B cell (primary cell): ENCODE measurements at regions of chr9 and their contacts with region 1.

Region 1: GRCh38 chr9:101398068-101398929 is at the starts of genes MRPL50 and ZNF189:
- DNase-seq: peak; percentile 99
- ATAC-seq: peak; percentile 93
- H3K4me3 ChIP-seq: peak within 1 kb of the TSS; percentile 72 to 98 (median 92)
- H3K4me3 Mint-ChIP-seq: peak within 1 kb of the TSS; percentile 100
- H3K27ac ChIP-seq: peak within 1 kb of the TSS; percentile 87 to 97
- H3K27ac Mint-ChIP-seq: peak within 1 kb of the TSS; percentile 99
- H3K4me1 ChIP-seq: peaks cover 20 to 21% of the 10 kb centered on the region in 2 donors
- H3K4me1 Mint-ChIP-seq: peaks cover 74% of the 10 kb centered on the region
- H3K27me3 ChIP-seq: no peaks in the 10 kb centered on the region
- H3K27me3 Mint-ChIP-seq: no peaks in the 10 kb centered on the region
- CTCF ChIP-seq: no peak
- total RNA-seq, gene MRPL50: 16.6 and 18.0 TPM in 2 replicates
- total RNA-seq, gene ZNF189: 25.7 and 30.8 TPM in 2 replicates

Region 2: GRCh38 chr9:101387871-101388506 is 10.3 kb before region 1 on chr9:
- CTCF ChIA-PET with region 1: interaction called, 10 read pairs
- POLR2A ChIA-PET with region 1: no interaction called
- intact Hi-C with region 1: no loop called
- DNase-seq: peak; percentile 41
- ATAC-seq: no peak
- H3K4me3 ChIP-seq: no peak overlapping the region
- H3K4me3 Mint-ChIP-seq: no peak overlapping the region
- H3K27ac ChIP-seq: peak overlapping the region in 1 of 2 donors; percentile 20
- H3K27ac Mint-ChIP-seq: peak overlapping the region; percentile 70
- H3K4me1 ChIP-seq: no peaks in the 10 kb centered on the region
- H3K4me1 Mint-ChIP-seq: peaks cover 20% of the 10 kb centered on the region
- H3K27me3 ChIP-seq: no peaks in the 10 kb centered on the region
- H3K27me3 Mint-ChIP-seq: no peaks in the 10 kb centered on the region
- CTCF ChIP-seq: peak; percentile 66

Region 3: DNA sequence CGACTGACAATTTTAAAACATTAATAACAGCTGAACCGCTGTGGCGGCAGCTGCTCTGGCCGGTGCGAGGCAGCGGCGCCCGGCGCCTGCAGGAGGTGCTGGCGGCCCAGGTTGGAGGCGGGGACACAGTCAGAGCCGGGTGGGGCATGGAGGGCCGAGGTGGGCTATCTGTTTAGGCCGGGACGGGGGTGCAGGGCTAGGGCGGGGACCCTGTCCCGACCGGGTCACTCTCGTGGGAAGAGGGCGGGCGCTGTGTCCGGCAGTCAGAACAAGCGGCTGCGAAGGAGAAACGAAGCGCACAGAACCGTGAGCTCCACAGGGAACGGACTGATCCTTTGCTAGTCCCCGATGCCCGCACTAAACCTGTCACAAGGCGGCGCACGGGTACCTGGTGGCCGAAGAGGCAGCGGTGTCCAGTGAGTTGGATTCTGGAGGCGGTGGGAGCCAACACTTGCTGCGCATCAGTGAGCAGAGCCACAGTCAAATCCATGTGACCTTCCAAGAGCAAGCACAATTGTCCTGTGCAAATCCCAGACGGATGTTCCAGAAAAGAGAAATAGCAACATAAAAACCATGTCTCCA is 50.9 kb after region 1 on chr9:
- CTCF ChIA-PET with region 1: interaction called, 4 read pairs
- POLR2A ChIA-PET with region 1: no interaction called
- intact Hi-C with region 1: loop called (anchors 5 kb)
- DNase-seq: peak; percentile 69
- ATAC-seq: peak; percentile 93
- H3K4me3 ChIP-seq: peak overlapping the region in 4 of 5 experiments; percentile 35 to 56 (median 47)
- H3K4me3 Mint-ChIP-seq: peak overlapping the region; percentile 82
- H3K27ac ChIP-seq: no peak overlapping the region
- H3K27ac Mint-ChIP-seq: no peak overlapping the region
- H3K4me1 ChIP-seq: peaks cover 10 to 12% of the 10 kb centered on the region in 2 donors
- H3K4me1 Mint-ChIP-seq: peaks cover 12% of the 10 kb centered on the region
- H3K27me3 ChIP-seq: peaks cover 0 to 29% (median 25%) of the 10 kb centered on the region in 4 experiments
- H3K27me3 Mint-ChIP-seq: peaks cover 65% of the 10 kb centered on the region
- CTCF ChIP-seq: peak; percentile 77